ENCODE measurements at regions of chr10 and their contacts with region 1.

Region 1: DNA sequence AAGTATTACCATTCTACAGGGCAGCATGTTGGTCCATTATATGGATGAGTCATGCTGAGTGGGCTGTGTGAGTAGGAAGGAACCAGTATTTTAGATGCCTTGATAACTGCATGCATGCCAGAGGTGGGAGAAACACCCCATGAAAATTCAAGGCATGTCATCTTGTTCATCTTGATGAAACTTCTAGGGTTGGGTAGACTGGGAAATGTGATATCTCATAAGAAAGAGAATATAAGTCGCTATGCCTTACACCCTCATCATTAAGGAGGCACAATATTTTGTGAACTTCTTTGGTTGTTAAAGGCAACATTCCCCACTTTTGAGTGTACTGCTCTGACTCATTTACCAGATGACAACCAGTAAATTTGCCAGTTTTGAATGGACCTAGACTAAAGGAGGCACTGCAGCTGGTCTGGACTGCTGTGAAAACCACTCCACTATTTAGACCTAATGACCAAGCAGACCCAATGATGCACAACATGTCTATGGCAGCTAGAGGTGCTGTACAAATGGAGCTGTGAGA is 48.0 kb downstream of the ZNF365 start:
- DNase-seq: no peak
- H3K4me3 Mint-ChIP-seq: no peak overlapping the region
- H3K27ac Mint-ChIP-seq: no peak overlapping the region
- H3K4me1 Mint-ChIP-seq: peaks cover 29% of the 10 kb centered on the region
- H3K27me3 Mint-ChIP-seq: peaks cover 2% of the 10 kb centered on the region

Region 2: DNA sequence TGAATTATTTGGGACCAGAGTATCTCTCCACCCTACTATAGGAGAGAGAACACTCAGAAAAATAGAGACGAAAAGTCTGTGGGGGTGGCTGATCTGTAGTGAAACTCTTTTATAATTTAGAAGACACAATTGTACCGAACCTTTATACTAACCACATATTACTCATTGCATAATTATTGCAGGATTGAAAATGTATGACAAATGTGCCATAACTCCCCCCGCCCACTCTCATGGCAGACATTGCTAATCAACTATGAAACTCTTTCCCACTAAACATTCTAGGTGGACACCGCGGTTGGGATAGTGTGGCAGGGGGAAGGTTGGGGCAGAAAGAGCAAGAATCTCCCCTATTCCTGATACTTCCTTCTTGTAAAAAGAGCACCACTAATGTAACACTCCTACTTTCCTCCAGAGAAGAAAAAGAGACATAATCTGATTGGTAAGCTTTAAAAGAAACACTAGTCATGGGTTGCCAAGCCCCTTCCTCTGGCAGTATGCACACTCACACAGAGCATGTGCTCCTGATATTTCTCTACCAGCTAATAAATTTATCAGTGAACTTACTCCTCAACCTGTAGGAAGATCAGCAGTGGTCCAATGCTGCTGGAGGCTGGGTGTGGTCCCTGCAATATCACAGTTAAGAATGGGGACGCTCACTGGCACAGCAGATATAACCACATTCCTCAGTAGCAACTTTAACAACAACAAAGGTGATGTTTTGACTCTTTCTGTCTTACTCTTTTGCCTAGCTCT is 539.3 kb before region 1 on chr10:
- CTCF ChIA-PET with region 1: interaction called, 4 read pairs
- POLR2A ChIA-PET with region 1: no interaction called
- intact Hi-C with region 1: loop called (anchors 5 kb)
- DNase-seq: peak; percentile 84
- H3K4me3 Mint-ChIP-seq: peak overlapping the region; percentile 47
- H3K27ac Mint-ChIP-seq: peak overlapping the region; percentile 77
- H3K4me1 Mint-ChIP-seq: peaks cover 30% of the 10 kb centered on the region
- H3K27me3 Mint-ChIP-seq: no peaks in the 10 kb centered on the region

Region 3: DNA sequence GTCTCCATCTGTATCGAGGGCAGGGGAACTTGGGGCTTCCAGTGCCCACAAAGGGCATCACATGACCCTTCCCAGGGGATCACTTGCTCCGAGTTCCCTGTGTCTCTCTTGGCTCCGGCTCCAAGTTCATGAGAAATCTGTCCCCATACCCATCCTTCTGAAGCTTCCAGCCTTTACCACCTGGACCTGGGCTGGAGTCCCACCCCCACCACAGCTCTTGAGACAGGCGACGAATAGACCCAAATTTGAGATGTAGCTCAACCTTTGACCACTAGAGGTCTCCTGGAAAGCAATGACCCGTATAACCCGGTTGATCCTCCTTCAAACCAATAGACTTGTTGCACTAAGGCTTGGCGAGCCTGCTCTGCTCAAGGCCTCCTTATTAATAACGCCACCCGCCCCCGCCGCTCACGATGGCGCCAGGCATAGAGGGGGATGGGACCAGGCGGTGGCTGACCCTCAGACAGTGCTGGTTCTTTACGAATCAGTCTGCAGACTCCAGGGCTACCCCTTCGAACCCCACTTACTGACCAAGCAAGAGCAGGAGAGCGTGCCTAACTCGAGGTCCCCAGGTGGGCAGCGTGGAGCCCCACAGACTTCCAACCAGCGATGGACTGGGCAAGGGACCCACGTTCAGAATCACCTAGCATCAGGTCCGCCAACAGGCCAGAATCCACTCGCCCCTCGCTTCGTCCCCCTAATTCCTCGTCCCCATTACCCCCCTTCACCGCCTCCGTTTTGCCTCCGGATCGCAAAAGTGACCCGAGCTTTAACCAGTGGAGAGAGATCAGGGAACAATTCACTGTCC is 525.1 kb before region 1 on chr10:
- CTCF ChIA-PET with region 1: no interaction called
- POLR2A ChIA-PET with region 1: no interaction called
- intact Hi-C with region 1: loop called (anchors 5 kb)
- DNase-seq: peak; percentile 70
- H3K4me3 Mint-ChIP-seq: peak overlapping the region; percentile 66
- H3K27ac Mint-ChIP-seq: peak overlapping the region; percentile 95
- H3K4me1 Mint-ChIP-seq: peaks cover 43% of the 10 kb centered on the region
- H3K27me3 Mint-ChIP-seq: no peaks in the 10 kb centered on the region

Region 4: DNA sequence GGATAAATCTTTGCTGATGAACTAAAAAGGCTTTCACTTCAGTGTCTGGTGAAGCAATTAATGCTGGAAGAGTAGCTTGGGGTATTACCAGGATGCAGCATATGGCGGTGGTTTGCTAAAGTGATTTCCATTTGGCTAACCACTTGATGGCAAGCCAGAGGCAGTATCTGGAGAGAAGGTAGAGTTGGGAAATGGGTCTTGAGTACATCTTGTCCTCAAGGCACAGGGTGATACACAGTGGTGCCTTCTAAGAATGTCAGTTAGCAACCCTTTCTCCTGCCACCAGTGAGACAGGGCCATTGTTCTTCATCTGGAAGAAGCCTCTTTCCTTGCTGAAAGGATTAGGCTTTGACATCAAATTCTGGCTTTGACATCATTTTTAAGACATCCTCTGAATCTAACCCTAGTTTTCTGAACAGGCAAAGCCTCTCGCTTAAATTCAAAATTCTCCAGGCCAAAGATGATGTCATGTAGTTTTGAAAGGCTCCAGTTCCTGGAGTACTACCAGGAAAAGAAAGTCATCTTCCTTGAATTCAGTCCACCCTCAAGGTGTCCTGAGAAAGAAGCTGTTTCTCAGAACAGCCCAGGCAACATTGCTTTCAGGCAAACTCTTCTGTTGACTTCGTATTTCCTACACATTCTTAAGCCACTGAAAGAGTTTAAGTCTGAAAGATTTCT is 358.2 kb before region 1 on chr10:
- CTCF ChIA-PET with region 1: no interaction called
- POLR2A ChIA-PET with region 1: no interaction called
- intact Hi-C with region 1: loop called (anchors 5 kb)
- DNase-seq: no peak
- H3K4me3 Mint-ChIP-seq: peak overlapping the region; percentile 41
- H3K27ac Mint-ChIP-seq: peak overlapping the region; percentile 93
- H3K4me1 Mint-ChIP-seq: peaks cover 90% of the 10 kb centered on the region
- H3K27me3 Mint-ChIP-seq: no peaks in the 10 kb centered on the region

Region 5: DNA sequence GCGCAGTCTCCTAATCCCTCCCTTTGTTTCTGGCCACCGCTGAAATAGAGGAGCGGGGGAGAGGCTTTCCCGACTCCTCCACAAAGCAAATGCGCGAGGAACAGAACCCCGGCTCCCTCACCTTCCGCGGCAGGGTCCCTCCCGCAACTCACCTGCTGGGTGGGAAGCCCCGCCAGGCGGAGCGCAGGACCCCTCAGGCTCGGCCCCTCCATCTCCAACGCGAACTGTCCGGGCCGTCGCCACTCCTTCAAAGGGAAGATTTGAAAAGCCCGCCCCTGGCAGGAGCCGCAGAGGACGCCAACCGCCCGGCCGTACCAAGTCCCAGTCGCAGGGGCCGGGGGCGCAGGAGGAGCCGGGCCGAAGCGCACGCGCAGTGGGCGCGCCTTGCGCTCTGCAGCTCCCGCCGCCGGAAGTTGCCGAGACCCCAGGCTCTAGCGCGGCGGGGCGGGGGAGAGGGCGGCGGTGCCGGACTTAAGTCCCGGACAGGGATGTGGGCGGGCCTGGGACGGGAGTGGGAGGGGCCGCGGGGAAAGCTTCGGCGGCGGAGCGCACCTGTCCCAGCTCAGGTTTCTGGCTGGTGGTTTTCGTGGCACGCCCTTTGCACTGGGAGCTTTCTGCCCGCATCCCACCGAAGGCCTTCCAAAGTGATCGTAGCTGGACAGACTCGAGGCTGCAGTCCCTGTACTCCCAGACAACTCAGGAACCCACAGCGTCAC is 153.6 kb before region 1 on chr10 and contains the start of gene RTKN2:
- CTCF ChIA-PET with region 1: interaction called, 4 read pairs
- POLR2A ChIA-PET with region 1: no interaction called
- intact Hi-C with region 1: loop called (anchors 1 kb)
- DNase-seq: peak; percentile 83
- H3K4me3 Mint-ChIP-seq: peak within 1 kb of the TSS; percentile 80
- H3K27ac Mint-ChIP-seq: no peak within 1 kb of the TSS
- H3K4me1 Mint-ChIP-seq: peaks cover 28% of the 10 kb centered on the region
- H3K27me3 Mint-ChIP-seq: peaks cover 7% of the 10 kb centered on the region
- total RNA-seq, gene RTKN2: 5.1 to 5.9 TPM

Region 6: GRCh38 chr10:62352356-62352970 is 69.7 kb before region 1 on chr10:
- CTCF ChIA-PET with region 1: interaction called, 3 read pairs
- POLR2A ChIA-PET with region 1: no interaction called
- intact Hi-C with region 1: loop called (anchors 1 kb)
- DNase-seq: peak; percentile 53
- H3K4me3 Mint-ChIP-seq: no peak overlapping the region
- H3K27ac Mint-ChIP-seq: no peak overlapping the region
- H3K4me1 Mint-ChIP-seq: peaks cover 20% of the 10 kb centered on the region
- H3K27me3 Mint-ChIP-seq: no peaks in the 10 kb centered on the region

Region 7: DNA sequence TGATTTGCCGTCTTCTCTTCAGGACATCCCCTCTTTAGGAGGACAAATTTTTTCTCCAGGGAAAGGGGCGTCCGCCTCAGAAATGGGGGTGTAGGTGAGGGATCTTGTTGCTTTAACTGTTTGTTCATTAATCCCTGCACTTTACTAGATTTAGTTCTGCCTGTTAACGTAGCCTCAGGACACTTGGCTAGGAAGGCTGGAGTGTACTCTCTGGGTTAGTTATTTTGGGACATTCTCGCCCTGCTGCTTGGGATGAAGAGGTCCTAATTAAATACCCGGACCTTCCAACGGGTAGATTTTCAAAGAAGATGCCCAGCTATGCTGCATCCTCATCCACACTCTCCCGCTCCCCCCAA is 48.5 kb before region 1 on chr10:
- CTCF ChIA-PET with region 1: no interaction called
- POLR2A ChIA-PET with region 1: no interaction called
- intact Hi-C with region 1: no loop called
- DNase-seq: no peak
- H3K4me3 Mint-ChIP-seq: peak overlapping the region; percentile 75
- H3K27ac Mint-ChIP-seq: peak overlapping the region; percentile 49
- H3K4me1 Mint-ChIP-seq: peaks cover 15% of the 10 kb centered on the region
- H3K27me3 Mint-ChIP-seq: peaks cover 15% of the 10 kb centered on the region

Region 8: DNA sequence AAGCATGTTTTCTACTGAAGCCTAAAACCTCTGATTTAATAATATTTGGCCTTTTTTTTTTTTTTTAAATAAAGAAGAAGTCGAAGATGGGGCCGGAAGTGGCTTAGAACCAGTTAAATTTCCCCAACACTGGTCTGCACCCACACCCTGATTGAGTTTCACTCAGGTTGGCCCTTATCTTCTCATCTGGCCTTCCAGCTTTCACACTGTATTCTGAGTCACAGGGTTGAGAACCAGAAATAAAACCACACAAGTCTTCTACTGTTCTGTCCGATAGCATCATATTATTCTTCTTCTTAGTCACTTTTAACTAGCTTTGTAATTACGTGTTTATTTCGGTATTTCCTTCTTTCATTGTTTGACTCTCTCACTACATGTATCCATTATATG is 38.1 kb before region 1 on chr10:
- CTCF ChIA-PET with region 1: interaction called, 3 read pairs
- POLR2A ChIA-PET with region 1: no interaction called
- intact Hi-C with region 1: loop called (anchors 1 kb)
- DNase-seq: peak; percentile 73
- H3K4me3 Mint-ChIP-seq: no peak overlapping the region
- H3K27ac Mint-ChIP-seq: peak overlapping the region; percentile 48
- H3K4me1 Mint-ChIP-seq: peaks cover 61% of the 10 kb centered on the region
- H3K27me3 Mint-ChIP-seq: no peaks in the 10 kb centered on the region

Region 9: DNA sequence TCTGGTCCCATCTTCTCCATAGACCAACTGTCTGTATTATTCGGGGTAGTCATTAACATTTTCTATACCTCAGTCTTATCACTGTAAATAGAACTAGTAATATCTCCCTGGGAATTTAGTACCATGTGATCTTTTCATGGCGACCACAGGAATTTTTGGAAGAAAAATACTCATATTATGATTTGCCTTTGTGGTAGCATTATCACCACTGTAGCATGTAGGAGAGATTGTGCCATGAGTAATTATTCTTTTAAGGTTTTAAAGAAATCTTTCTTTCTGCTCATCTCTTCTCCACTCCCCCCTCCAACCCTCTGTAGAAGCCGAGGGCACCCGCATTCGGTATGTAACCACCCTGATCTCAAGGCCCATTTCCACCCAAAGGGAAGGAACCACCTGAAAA is 22.9 kb before region 1 on chr10:
- CTCF ChIA-PET with region 1: no interaction called
- POLR2A ChIA-PET with region 1: no interaction called
- intact Hi-C with region 1: no loop called
- DNase-seq: no peak
- H3K4me3 Mint-ChIP-seq: no peak overlapping the region
- H3K27ac Mint-ChIP-seq: no peak overlapping the region
- H3K4me1 Mint-ChIP-seq: no peaks in the 10 kb centered on the region
- H3K27me3 Mint-ChIP-seq: no peaks in the 10 kb centered on the region

Region 10: DNA sequence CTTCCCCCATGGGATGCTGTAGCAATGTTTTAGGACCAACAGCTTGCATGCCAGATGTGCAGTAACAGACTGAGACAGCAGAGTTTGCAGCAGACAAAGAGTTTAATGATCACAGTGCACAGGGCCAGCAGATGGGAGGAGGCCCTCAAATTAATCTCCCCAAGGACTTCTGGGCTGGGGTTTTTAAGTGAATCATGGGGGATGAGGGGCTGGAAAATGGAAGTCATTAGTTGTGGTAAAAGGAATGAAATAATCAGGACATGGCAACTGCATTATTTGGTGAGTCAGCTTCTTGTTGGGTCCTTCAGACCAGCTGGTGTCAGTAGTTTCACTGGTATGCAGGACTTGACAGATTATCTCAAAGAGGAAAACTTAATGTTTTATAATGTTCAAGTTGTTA is 698.4 kb after region 1 on chr10:
- CTCF ChIA-PET with region 1: no interaction called
- POLR2A ChIA-PET with region 1: no interaction called
- intact Hi-C with region 1: no loop called
- DNase-seq: no peak
- H3K4me3 Mint-ChIP-seq: no peak overlapping the region
- H3K27ac Mint-ChIP-seq: no peak overlapping the region
- H3K4me1 Mint-ChIP-seq: no peaks in the 10 kb centered on the region
- H3K27me3 Mint-ChIP-seq: peaks cover 3% of the 10 kb centered on the region